OCI-LY7 (cell line): ENCODE measurements at regions of chr4 and their contacts with region 1.

Region 1: DNA sequence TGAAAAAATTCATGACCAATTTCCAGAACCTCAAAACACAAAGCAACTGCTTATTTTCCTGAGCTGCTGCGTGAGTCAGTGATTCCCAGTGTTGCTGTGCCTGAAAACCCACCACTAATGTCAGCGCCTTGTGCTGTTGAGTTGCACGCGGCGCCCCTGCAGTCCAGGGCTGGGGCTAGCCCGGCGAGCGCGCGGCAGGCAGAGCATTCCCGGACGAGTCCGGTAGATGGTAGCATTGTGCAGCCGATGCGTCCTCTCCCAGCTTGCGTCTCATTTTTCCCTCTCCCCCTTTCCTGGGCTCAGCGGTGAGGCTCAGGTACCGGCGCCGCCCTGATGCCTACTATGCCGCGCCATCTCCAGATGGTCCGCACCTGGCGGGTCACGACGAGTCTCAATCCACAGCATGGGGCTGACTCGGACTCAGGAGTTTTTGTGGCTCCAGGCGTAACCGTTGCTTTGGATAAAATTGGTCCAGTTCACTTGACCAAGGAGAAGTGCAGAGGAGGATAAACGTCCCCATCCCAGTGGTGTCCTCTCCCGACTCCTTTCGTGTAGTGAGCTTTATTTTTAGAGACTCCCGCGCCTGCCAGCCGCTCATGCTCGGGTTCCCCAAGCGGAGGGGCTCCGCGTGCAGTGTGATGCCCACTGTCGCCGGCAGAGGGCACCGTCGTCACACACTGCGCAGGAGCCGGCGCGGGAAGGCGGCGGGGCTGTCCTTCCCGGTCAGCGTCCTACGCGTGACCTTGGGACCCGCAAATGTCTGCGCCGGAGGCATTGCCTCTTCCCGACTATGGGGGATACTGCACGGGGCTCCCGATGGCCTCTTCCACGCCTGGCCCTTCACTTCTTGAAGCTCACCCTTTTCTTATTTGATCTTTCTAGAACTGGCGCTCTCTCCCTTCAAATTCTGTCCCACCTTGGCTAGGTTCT is 53.6 kb upstream of the IGFBP7 start:
- DNase-seq: peak; percentile 65
- H3K4me3 ChIP-seq: peak overlapping the region; percentile 67
- H3K27ac ChIP-seq: no peak overlapping the region
- H3K4me1 ChIP-seq: no peaks in the 10 kb centered on the region
- CTCF ChIP-seq: peak; percentile 82

Region 2: DNA sequence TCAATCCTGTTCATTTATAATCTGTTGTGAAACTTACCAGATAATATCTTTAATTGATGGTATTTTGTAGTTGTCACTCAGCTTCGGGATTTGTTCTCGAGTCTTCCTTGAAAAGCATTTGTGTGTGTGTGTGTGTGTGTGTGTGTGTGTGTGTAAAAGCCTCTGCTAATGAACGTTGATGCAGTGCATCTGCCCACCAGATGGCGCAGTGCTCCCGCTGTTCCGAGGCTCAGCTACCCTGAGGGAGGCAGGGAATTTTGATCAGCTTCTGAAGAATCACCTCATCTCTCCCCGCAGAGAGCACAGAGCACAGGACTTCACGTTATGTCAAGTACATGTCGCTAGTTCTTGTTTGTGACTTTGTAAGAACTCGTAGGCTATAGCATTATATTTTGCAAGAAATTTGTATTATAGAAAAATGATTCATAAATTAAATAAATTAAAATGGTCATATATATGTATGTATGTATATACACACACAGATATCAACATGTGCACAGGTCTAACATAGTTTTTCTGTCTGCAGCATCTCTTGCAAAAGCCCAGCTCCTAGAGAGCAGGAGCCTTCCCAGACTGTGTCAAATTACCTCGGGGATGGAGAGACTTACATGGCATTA is 263.1 kb after region 1 on chr4:
- CTCF ChIA-PET with region 1: interaction called, 3 read pairs
- POLR2A ChIA-PET with region 1: no interaction called
- intact Hi-C with region 1: loop called (anchors 5 kb)
- DNase-seq: peak; percentile 67
- H3K4me3 ChIP-seq: no peak overlapping the region
- H3K27ac ChIP-seq: no peak overlapping the region
- H3K4me1 ChIP-seq: no peaks in the 10 kb centered on the region
- CTCF ChIP-seq: peak; percentile 82